ENCODE measurements at regions of chr10 and their contacts with region 1.

Region 1: DNA sequence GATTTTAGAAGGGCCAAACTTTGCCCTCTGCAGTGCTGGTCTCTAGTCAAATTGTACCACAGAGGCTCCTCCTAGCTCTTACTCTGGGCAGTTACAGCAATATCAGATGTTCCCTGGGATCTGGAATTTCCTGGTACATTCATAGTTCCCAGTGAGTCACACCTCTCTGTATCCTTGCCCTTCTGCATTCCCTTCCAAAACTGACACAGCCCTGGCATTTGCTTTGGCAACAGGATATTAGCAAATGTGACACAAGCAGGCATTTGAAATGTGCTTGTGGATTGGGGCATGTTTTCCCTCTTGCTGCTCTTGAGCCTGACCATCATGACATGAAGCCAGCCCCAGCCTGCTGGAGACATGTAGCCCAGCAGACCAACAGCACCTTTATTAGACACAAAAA is 284.7 kb upstream of the AKR1E2 start:
- DNase-seq: no peak
- ATAC-seq: peak in 4 of 8 donors; percentile 35 to 89 (median 74)
- H3K4me3 ChIP-seq: no peak overlapping the region
- H3K27ac ChIP-seq: peak overlapping the region in 2 of 10 donors; percentile 11 to 62
- H3K4me1 ChIP-seq: peaks cover 0 to 6% (median 0%) of the 10 kb centered on the region in 9 donors
- H3K27me3 ChIP-seq: no peaks in the 10 kb centered on the region
- CTCF ChIP-seq: no peak

Region 2: GRCh38 chr10:3692387-3692999 is 848.8 kb before region 1 on chr10:
- intact Hi-C with region 1: no loop called
- DNase-seq: no peak
- ATAC-seq: no peak
- H3K4me3 ChIP-seq: no peak overlapping the region
- H3K27ac ChIP-seq: peak overlapping the region in 1 of 10 donors; percentile 20
- H3K4me1 ChIP-seq: peaks cover 0 to 18% (median 11%) of the 10 kb centered on the region in 9 donors
- H3K27me3 ChIP-seq: no peaks in the 10 kb centered on the region
- CTCF ChIP-seq: no peak

Region 3: DNA sequence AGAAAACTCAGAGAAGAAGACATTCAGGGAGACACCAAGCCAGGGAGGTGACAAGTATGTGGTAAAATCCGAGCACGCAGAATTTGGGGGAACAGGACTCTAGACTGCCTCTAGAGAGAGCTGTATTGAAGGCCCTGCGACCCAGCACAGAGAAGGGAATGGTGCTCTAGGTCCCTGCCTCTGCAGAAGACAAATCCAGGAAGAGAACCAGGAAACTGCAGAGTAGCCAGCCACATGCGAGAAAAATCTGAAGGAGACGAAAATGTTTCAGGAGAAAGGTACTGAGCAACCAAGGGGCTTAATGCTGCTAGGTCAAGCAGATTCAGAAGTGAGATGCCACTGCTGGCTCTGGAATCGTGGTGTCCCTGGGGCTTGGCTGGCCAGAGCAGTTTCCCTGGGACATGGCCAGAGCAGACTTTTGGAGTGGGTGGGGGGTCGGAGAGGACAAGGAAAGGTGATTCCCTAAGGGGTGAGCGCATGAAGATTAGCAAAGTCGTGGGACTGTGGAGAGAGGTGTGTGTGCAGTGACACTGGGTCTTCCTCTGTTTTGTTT is 598.3 kb before region 1 on chr10:
- intact Hi-C with region 1: loop called in 1 of 10 experiments (anchors 5 kb)
- DNase-seq: no peak
- ATAC-seq: peak in 6 of 8 donors; percentile 40 to 62 (median 47)
- H3K4me3 ChIP-seq: no peak overlapping the region
- H3K27ac ChIP-seq: no peak overlapping the region
- H3K4me1 ChIP-seq: peaks cover 0 to 19% (median 3%) of the 10 kb centered on the region in 9 donors
- H3K27me3 ChIP-seq: no peaks in the 10 kb centered on the region
- CTCF ChIP-seq: no peak

Region 4: DNA sequence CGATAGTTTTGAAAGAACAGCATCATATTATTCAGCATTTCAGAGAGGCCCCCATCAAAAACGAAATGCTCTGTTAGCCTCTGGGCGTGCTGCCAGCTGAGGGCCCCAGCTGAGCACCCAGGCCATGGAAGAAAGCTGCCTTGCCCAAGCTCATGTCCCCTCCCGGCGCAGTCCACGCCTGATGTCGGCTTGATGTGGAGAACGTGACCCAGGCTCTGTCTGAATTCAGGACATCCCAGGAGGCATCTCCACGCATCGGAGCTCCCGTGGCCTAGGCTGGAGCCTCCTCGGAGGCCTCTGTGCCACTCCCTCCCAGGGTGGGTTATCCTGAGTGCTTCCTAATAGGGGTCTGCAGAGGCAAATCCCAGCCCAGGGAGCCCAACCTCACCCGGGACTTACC is 66.4 kb after region 1 on chr10:
- intact Hi-C with region 1: loop called in 1 of 10 experiments (anchors 5 kb)
- DNase-seq: no peak
- ATAC-seq: no peak
- H3K4me3 ChIP-seq: no peak overlapping the region
- H3K27ac ChIP-seq: no peak overlapping the region
- H3K4me1 ChIP-seq: peaks cover 0 to 6% (median 0%) of the 10 kb centered on the region in 9 donors
- H3K27me3 ChIP-seq: no peaks in the 10 kb centered on the region
- CTCF ChIP-seq: no peak

Measured in heart right ventricle (tissue), 16 donors.